ENCODE measurements at regions of chr3 and their contacts with region 1.

Region 1: DNA sequence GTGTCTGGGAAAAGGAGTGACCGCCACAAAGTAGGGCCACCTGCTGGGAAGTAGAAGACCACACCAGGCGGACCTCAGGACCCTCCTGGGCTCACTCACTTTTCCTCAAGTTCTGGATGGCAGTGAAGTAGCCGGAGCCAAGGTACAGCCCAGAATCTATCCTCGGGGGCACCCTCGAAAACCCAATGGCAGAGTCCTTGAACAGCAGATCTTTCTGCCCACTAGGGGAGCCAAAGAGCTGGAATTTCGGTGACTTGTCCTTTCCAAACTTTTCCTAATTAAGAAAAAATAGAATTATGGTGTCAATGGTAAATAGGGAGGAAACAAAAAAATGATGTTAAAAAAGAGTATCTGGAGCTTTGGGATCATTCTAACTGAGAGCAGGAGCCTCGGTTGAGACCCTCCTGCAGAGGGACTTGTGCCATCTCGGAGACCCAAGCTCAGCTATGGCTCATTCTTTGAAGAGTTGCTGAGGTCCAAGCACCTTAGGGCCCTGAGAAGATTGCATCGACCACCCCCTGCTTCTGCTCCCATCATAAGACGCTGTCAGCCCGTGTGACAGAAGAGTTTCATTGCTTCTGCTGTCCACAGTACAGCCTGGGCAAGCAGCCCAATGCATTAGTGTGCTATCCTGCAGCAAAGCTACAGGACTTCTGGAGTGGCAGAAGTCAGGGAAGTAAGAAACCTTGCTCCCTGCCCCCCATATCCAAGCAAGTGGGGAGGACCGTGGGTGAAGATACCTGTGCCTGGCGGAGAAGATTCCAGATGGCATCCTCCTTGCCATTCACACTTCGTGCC is 14.8 kb downstream of the LTF start:
- DNase-seq: no peak
- H3K4me3 ChIP-seq: no peak overlapping the region
- H3K27ac ChIP-seq: no peak overlapping the region
- H3K4me1 ChIP-seq: no peaks in the 10 kb centered on the region
- H3K27me3 ChIP-seq: peaks cover 0 to 8% of the 10 kb centered on the region in 2 experiments
- CTCF ChIP-seq: peak; percentile 62 to 65
- POLR2A ChIP-seq: no peak

Region 2: GRCh38 chr3:46462111-46462510 is 12.2 kb after region 1 on chr3:
- CTCF ChIA-PET with region 1: interaction called, 34 read pairs
- POLR2A ChIA-PET with region 1: no interaction called
- dilution Hi-C with region 1: no loop called
- intact Hi-C with region 1: no loop called
- DNase-seq: no peak
- H3K4me3 ChIP-seq: no peak overlapping the region
- H3K27ac ChIP-seq: no peak overlapping the region
- H3K4me1 ChIP-seq: no peaks in the 10 kb centered on the region
- H3K27me3 ChIP-seq: no peaks in the 10 kb centered on the region
- CTCF ChIP-seq: no peak
- POLR2A ChIP-seq: no peak

Region 3: DNA sequence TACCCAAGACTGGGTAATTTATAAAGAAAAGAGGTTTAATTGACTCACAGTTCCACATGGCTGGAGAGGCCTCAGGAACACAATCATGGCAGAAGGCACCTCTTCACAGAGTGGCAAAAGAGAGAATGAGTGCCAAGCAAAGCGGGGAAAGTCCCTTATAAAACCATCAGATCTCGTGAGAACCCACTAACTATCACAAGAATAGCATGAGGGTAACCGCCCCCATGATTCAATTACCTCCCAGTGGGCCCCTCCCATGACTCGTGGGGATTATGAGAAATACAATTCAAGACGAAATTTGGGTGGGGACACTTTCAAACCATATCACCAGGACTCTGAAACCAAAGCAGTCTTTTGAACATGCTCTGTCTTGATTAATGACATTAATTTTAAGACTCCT is 54.8 kb after region 1 on chr3:
- CTCF ChIA-PET with region 1: no interaction called
- POLR2A ChIA-PET with region 1: no interaction called
- dilution Hi-C with region 1: no loop called
- intact Hi-C with region 1: no loop called
- DNase-seq: no peak
- H3K4me3 ChIP-seq: no peak overlapping the region
- H3K27ac ChIP-seq: no peak overlapping the region
- H3K4me1 ChIP-seq: no peaks in the 10 kb centered on the region
- H3K27me3 ChIP-seq: peaks cover 0 to 2% of the 10 kb centered on the region in 2 experiments
- CTCF ChIP-seq: no peak
- POLR2A ChIP-seq: no peak